HepG2 (cell line): ENCODE measurements at regions of chr14 and their contacts with region 1.

Region 1: DNA sequence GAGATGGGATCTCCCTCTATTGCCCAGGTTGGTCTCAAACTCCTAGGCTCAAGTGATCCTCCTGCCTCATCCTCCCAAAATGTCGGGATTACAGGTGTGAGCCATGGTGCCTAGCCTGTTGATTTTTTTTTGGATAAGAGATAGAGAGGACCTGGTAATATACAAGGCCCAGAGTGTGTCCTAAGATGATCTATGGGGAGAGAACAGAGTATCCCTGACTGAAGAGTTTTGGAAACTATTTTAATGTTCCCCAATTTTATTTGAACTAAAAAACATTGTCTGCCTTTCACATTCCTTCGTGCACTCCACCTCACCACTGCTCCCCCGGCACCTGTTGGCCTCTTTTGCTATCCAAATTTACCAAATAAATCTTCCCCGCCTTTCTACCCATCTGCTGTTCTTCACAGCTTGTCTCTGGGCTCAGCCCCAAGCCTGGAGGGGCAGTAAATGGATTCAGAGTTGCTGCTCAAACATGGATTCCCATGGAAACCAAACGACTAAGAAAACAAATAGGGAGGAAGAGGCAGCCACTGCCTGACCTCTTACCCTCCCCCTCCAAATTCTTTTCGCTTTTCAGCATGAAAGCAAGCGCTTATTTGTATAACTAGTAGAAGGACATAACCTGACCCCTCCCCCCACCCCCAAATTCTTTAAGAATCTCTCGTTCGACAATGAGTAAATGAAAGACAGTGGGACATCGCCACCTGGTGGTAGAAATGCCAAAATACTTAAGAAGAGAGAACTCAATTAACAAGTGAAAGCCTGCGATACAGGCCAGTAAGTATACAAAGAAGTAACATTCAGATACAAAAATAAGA is 22.6 kb downstream of the OR10G3 start:
- DNase-seq: peak; percentile 99
- ATAC-seq: peak; percentile 95
- H3K4me3 ChIP-seq: peak overlapping the region; percentile 27 to 69 (median 32)
- H3K27ac ChIP-seq: peak overlapping the region; percentile 60
- H3K4me1 ChIP-seq: peaks cover 26% of the 10 kb centered on the region
- H3K27me3 ChIP-seq: no peaks in the 10 kb centered on the region
- CTCF ChIP-seq: peak; percentile 85
- EP300 ChIP-seq: peak; percentile 70 to 95
- POLR2A ChIP-seq: no peak
- RAD21 ChIP-seq: peak; percentile 89

Region 2: GRCh38 chr14:21383848-21384493 is 173.3 kb before region 1 on chr14 and contains the start of gene SUPT16H:
- CTCF ChIA-PET with region 1: no interaction called
- POLR2A ChIA-PET with region 1: no interaction called
- in situ Hi-C with region 1: no loop called
- intact Hi-C with region 1: loop called (anchors 10 kb)
- DNase-seq: peak; percentile 94
- ATAC-seq: peak; percentile 91
- H3K4me3 ChIP-seq: peak within 1 kb of the TSS; percentile 74 to 97 (median 90)
- H3K27ac ChIP-seq: peak within 1 kb of the TSS; percentile 92
- H3K4me1 ChIP-seq: peaks cover 43% of the 10 kb centered on the region
- H3K27me3 ChIP-seq: no peaks in the 10 kb centered on the region; a peak in 1 of 5 replicates
- CTCF ChIP-seq: peak; percentile 11; the same call in 1 of the 2 replicates
- EP300 ChIP-seq: peak in 1 of 2 experiments; percentile 25; a peak in 2 of 4 replicates
- POLR2A ChIP-seq: peak; percentile 80 to 92
- RAD21 ChIP-seq: peak; percentile 46; the same call in 1 of the 2 replicates
- total RNA-seq, gene SUPT16H: 230 and 340 TPM in 2 replicates

Region 3: DNA sequence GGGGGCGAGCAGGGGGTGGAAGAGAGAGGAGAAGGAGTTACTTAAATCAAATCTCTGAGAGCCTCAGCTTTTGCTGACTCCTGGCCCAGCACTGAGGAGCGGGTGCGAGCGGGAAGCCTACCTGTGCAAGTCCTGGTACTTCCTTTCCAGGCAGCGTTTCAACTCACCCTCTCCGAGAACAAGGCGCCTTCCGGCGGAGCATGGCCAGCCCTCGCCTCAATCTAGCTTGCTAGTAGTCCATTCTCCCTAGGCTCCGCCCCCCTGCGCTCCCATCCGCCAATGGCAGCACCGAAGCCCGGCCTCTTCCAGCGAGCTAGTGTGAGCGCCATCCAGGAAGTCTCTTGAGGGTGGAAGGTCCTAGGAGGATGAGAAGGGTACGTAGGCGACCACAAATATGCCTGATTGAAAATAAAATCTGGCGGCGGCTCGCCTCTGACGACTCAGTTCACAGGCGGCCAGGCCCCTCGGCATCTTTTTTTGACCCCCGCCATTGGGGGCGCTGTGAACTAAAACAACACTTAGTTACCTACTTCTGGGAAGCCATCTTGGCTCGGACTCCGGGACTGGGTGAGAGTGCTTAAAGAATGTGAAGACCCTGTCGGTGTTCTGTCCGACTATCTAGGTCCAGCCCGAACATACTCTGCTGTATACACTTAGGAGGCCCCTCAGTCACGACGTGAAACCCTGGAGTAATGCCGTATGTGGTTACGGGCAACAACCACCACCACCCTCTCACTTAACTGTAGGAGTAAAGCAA is 101.2 kb before region 1 on chr14 and contains the start of gene CHD8:
- CTCF ChIA-PET with region 1: interaction called, 4 read pairs
- POLR2A ChIA-PET with region 1: interaction called, 16 read pairs
- in situ Hi-C with region 1: no loop called
- intact Hi-C with region 1: loop called (anchors 1 kb)
- DNase-seq: peak; percentile 100
- ATAC-seq: peak; percentile 99
- H3K4me3 ChIP-seq: peak within 1 kb of the TSS; percentile 90 to 95 (median 93)
- H3K27ac ChIP-seq: peak within 1 kb of the TSS; percentile 96
- H3K4me1 ChIP-seq: peaks cover 38% of the 10 kb centered on the region
- H3K27me3 ChIP-seq: no peaks in the 10 kb centered on the region; a peak in 1 of 5 replicates
- CTCF ChIP-seq: peak; percentile 96
- EP300 ChIP-seq: peak in 1 of 2 experiments; percentile 46; a peak in 1 of 4 replicates
- POLR2A ChIP-seq: peak; percentile 91 to 95
- RAD21 ChIP-seq: peak; percentile 63
- total RNA-seq, gene CHD8: 79.6 and 92.9 TPM in 2 replicates

Region 4: DNA sequence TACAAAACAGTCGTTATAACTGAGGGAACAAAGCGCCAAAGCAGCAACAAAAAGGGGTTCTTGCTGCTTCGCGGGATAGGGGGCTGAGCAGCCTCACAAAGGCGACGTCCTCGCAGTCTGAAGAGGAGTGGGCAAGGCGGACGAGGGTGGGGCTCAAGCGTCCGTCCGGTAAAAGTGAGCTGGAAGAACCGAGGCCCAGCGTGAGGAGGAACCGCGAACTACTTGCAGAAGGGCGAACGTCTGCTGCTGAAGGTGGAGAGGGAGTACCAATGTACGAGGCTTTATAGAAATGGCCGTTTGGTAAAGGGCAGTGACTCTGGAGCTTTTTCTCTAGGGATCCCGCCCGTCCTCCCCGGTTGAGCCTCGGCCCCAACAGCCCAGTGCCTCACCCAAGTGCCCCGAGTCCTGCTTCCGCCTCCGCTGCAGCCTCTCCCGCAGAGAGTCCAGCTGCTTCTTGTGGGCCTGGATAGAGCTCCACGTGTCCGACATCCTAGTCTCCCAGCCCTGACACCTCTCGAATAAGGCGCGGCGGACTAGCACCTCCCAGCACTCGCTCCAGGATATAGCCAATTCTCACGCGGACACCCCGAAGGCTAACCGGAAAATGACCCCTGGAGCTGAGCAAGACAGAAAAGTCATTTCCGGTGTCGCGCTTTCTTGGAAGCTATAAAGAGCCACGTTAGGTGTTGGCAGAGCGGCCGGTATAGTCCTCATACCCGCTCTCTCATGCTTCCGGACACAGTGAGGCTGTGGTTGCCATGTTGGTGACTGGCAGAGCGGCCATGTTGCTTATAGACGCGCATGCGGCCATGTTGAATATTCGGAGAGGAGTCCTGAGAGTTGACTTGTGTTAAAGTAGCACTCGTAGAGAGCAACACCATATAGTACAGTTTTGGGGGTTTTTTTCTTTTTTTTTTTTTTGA is 46.3 kb before region 1 on chr14 and contains the start of gene METTL3:
- CTCF ChIA-PET with region 1: no interaction called
- POLR2A ChIA-PET with region 1: interaction called, 11 read pairs
- in situ Hi-C with region 1: no loop called
- intact Hi-C with region 1: loop called (anchors 1 kb)
- DNase-seq: peak; percentile 100
- ATAC-seq: peak; percentile 97
- H3K4me3 ChIP-seq: peak within 1 kb of the TSS; percentile 84 to 97 (median 87)
- H3K27ac ChIP-seq: peak within 1 kb of the TSS; percentile 80
- H3K4me1 ChIP-seq: peaks cover 53% of the 10 kb centered on the region
- H3K27me3 ChIP-seq: no peaks in the 10 kb centered on the region; a peak in 1 of 5 replicates
- CTCF ChIP-seq: peak; percentile 53
- EP300 ChIP-seq: 0 out of 4 replicates have a peak, but pooled peaks of 1 of the 2 experiments have one; percentile 1
- POLR2A ChIP-seq: peak; percentile 97
- RAD21 ChIP-seq: peak; percentile 10; the same call in 1 of the 2 replicates
- total RNA-seq, gene METTL3: 114 and 123 TPM in 2 replicates

Region 5: DNA sequence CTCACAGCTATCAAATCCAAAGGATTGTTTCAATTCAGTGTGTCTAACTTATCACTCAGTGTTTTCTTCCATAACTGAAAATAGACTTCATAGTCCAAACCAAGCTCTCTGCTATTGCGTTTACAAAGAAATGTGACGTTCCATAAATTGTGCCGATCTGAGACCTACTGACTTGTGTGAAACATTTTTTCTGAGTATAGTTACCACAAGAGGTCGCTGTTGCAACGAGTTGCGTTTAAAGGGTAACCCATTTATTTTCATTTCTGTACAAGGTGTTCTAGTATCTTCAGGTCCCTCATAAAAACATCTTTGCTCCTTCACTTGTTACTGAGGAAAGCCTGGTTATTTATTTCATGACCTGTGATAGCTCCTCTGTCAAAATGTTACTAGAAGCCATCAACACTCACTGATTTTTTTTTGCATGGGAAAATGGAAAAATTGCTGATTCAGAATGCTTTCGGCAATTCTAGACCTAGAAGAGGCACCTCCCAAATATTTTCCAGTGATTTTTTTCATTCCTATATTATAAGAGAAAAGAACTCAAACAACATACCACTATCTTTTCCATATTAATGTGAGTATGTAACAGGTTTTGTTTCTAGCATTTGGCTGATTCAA is 177.3 kb after region 1 on chr14:
- CTCF ChIA-PET with region 1: no interaction called
- POLR2A ChIA-PET with region 1: no interaction called
- in situ Hi-C with region 1: no loop called
- intact Hi-C with region 1: no loop called
- DNase-seq: peak; percentile 75
- ATAC-seq: peak; percentile 79
- H3K4me3 ChIP-seq: no peak overlapping the region
- H3K27ac ChIP-seq: no peak overlapping the region
- H3K4me1 ChIP-seq: no peaks in the 10 kb centered on the region
- H3K27me3 ChIP-seq: 0 out of 5 replicates have a peak, but pooled peaks cover 0 to 2% of the 10 kb centered on the region in 2 experiments
- CTCF ChIP-seq: peak; percentile 78
- EP300 ChIP-seq: no peak
- POLR2A ChIP-seq: no peak
- RAD21 ChIP-seq: no peak